Prostate gland (tissue), 2 donors: ENCODE measurements at regions of chr4 and their contacts with region 1.

Region 1: GRCh38 chr4:121370729-121371325 is 10.0 kb downstream of the QRFPR start:
- DNase-seq: peak; percentile 8
- H3K4me3 ChIP-seq: no peak overlapping the region
- H3K27ac ChIP-seq: no peak overlapping the region
- H3K4me1 ChIP-seq: no peaks in the 10 kb centered on the region
- H3K27me3 ChIP-seq: no peaks in the 10 kb centered on the region
- CTCF ChIP-seq: peak in 3 of 4 experiments; percentile 57 to 62 (median 57)
- POLR2A ChIP-seq: no peak

Region 2: DNA sequence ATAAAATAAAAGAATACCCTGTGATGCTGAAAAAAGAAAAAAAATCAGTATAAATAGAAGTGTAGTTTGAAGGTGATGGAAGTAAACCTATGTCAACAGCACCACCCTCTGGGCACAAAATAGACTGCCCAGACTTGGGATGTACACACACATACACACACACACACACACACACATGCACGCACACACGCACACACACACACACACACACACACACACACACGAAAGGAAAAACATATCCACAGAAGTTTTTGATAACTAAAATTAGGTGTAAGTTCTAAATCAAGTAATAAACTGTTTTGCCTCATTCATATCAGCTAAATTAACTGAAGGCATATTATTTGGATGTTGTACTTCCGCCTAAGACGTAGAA is 285.4 kb after region 1 on chr4:
- intact Hi-C with region 1: loop called (anchors 5 kb)
- DNase-seq: peak; percentile 20
- H3K4me3 ChIP-seq: no peak overlapping the region
- H3K27ac ChIP-seq: no peak overlapping the region
- H3K4me1 ChIP-seq: no peaks in the 10 kb centered on the region
- H3K27me3 ChIP-seq: no peaks in the 10 kb centered on the region
- CTCF ChIP-seq: peak in 3 of 4 experiments; percentile 36 to 59 (median 48)
- POLR2A ChIP-seq: no peak

Region 3: DNA sequence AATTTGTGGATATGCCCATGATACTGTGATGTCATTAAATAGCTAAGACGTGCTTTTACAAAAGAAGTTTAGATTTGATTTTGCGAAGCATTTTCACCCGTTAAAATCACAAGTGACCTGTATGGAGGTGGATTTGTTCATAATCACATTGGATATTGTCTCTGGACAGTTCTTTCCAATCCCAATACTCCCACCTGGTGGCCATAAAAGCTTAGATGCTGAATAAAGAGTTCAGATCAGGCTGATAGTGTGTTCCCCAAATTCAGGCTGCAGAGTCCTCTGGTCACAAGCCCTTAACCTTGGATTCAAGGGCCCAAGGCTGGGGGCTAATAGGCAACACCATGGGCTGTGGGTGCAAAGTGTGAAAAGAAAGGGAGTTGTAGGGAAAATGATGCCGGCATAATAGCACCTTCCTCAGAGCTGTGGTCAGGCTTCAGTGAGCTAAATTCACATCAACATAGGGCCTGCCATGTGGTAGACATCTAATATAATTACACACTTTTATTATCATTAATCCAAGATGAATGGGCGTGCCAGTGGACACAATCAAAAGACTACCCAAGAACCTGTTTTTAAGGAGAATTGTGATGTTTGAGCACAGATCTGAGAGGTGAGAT is 366.0 kb after region 1 on chr4:
- intact Hi-C with region 1: loop called (anchors 5 kb)
- DNase-seq: peak; percentile 43
- H3K4me3 ChIP-seq: no peak overlapping the region
- H3K27ac ChIP-seq: no peak overlapping the region
- H3K4me1 ChIP-seq: no peaks in the 10 kb centered on the region
- H3K27me3 ChIP-seq: no peaks in the 10 kb centered on the region
- CTCF ChIP-seq: peak in 3 of 4 experiments; percentile 37 to 50 (median 44)
- POLR2A ChIP-seq: no peak